Motor neuron (in vitro differentiated cells): ENCODE measurements at regions of chr16 and their contacts with region 1.

Region 1: DNA sequence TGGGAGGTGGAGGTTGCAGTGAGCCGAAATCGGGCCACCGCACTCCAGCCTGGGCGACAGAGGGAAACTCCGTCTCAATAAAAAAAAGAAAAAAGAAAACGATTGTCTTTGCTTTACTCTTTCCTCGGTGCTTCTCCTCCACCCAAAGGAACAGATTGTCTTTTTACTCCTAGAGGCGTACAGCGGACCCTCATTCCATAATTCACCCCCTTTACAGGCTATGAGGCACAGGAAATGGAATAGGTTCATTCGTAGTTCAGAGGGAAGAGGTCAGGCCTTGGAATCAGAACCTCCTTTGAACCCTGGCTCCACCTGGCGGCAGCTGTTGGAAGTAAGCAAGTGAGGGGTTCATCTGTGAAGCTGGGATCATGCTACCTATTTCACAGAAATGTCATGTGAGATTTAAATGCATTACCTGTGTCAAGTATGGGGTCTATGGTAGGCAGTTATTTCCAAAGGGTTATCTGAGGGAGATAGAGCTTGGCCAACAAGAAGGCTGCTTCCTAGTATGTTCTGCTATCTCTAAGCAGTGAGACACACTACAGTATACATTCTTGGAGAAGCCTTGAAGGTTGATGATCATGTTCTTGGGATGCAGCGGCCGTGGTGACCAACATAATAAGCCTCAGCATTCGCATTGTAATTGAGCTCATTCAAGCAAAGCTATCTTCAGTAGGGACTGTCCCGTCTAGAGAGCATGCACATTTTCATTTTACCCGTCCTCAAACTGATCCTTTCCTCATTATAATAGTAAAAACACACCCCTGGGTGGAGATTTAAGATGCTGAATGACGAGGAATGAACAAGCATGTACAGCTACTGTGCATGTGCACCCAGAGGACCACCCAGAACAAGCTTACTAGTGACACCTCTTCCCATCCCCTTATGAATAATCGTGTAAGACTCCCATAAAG is 18.7 kb upstream of the ZNF689 start:
- ATAC-seq: peak; percentile 77 to 94 (median 90)
- H3K4me3 ChIP-seq: peak overlapping the region in 1 of 5 donors; percentile 2
- H3K27ac ChIP-seq: peak overlapping the region in 1 of 2 donors; percentile 55
- H3K4me1 ChIP-seq: peaks cover 3 to 7% of the 10 kb centered on the region in 2 donors

Region 2: DNA sequence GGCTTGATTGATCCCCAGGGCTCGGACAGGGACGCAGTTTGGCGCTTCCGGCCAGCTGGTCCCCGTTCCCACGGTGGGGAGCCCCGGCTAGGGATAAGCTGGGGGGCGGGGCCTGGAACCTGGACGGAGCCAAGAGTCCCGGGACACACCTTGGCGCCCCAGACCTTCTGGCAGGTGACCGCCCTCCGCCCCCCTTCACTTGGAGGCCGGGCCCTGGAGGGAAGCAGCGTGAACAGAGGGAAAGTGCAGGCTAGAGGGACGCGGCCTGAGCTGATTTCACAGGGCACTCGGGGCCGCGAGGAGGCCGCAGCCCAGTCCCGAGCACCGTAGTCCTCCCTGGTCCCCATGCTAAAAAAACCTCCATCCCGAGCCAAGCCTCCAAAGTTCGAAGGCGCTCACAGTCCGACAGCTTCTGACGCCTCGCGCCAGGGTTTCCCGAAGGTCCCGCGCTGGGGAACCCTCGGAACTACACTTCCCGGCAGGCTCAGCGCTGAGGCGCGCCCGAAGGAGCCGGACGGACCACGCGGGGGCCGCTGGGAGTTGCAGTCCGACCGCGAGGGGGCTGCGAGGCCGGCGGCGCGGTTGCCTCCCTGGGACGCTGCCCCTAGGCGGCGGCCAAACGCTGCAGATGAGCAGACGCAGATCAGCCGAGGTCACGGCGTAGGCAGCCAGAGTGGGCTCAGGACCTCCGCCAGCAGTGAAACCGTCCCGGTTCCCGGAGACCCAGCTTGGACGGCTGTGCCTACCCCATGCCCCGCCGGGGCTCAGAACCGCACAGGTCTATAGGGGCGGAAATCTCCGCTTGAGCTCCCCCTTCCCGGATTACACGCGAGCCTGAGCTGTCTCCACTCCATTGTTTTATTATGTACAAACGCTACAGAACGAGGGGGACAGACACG is 537.2 kb before region 1 on chr16 and contains the start of gene TBX6:
- in situ Hi-C with region 1: loop called in 1 of 9 experiments (anchors 25 kb)
- ATAC-seq: peak; percentile 72 to 88 (median 80)
- H3K4me3 ChIP-seq: peak within 1 kb of the TSS; percentile 29 to 38 (median 35)
- H3K27ac ChIP-seq: peak within 1 kb of the TSS; percentile 59 to 62
- H3K4me1 ChIP-seq: peaks cover 24 to 27% of the 10 kb centered on the region in 2 donors
- total RNA-seq, gene TBX6: 0.25 to 1.6 (median 0.63) TPM

Region 3: GRCh38 chr16:30429678-30430427 is 199.0 kb before region 1 on chr16 and contains the start of gene DCTPP1:
- in situ Hi-C with region 1: loop called in 5 of 9 experiments (anchors 25 kb)
- ATAC-seq: peak; percentile 97 to 99 (median 98)
- H3K4me3 ChIP-seq: peak within 1 kb of the TSS; percentile 54 to 70 (median 56)
- H3K27ac ChIP-seq: peak within 1 kb of the TSS; percentile 78 to 79
- H3K4me1 ChIP-seq: peaks cover 10 to 16% of the 10 kb centered on the region in 2 donors
- total RNA-seq, gene DCTPP1: 16.4 to 50.9 (median 26.7) TPM

Region 4: GRCh38 chr16:30526823-30527635 is 101.9 kb before region 1 on chr16:
- in situ Hi-C with region 1: no loop called
- ATAC-seq: peak; percentile 84 to 92 (median 88)
- H3K4me3 ChIP-seq: peak overlapping the region; percentile 63 to 96 (median 84)
- H3K27ac ChIP-seq: peak overlapping the region; percentile 96 to 99
- H3K4me1 ChIP-seq: peaks cover 6% of the 10 kb centered on the region in 2 donors

Region 5: DNA sequence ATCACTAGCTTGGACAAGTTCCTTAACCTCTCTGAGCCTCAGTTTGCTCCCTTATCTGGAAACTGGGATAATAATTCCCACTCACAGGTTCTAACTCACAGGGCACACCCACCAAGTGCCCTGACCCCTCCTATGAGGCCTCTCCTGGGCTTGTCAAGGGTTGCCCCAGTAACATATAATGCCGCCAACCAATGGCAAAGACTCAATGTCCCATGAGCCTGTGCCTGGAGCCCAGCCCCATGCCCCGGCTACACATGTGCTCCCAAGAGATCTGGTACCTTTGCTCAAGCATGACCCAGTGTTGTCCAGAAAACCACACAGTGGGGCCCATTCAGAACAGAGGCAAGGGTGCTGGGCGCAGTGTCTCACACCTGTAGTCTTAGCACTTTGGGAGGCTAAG is 285.9 kb after region 1 on chr16:
- in situ Hi-C with region 1: no loop called
- ATAC-seq: peak in 2 of 8 experiments; percentile 20 to 32
- H3K4me3 ChIP-seq: no peak overlapping the region
- H3K27ac ChIP-seq: no peak overlapping the region
- H3K4me1 ChIP-seq: no peaks in the 10 kb centered on the region